AG04449 (cell line): ENCODE measurements at regions of chr19 and their contacts with region 1.

Region 1: DNA sequence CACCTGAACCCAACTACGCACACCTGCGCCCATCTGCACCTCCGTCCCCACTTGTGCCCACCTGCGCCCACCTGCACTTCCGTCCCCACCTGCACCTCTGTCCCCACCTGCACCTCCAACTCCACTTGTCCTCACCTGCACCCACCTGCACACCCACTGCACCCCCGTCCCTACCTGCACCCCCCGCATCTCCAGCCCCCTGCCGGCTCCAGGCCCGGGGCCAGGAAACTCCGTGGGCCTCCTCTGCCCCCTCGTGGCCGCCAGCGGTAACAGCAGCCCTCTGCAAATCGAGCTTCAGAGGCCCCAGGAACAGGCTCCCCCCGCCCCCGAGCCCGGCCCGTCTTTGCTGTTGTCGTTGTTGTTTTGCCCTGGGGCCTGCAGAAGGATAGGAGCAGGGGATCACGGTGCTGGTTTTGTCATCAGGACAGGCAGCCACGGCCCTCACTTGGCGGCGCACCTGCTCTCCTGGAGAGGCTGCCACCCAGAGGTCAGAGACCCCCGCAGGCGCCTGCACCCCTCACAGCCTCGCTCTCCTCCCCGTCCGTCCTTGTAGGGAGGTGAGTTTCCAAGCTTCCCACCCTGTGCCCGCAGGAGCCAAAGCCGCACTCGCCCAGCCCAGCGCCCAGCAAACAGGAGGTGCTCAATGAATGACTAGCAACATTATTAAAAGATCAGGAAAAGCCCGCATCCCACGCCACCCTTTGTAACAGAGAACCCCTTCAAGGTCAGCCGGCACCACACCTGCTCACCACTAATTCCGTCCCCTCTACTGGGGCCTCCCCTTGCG is 65.4 kb downstream of the GNG7 start:
- DNase-seq: no peak
- H3K4me3 ChIP-seq: no peak overlapping the region
- CTCF ChIP-seq: peak; percentile 87

Region 2: GRCh38 chr19:2427429-2428320 is 209.4 kb before region 1 on chr19 and contains the start of gene TIMM13:
- CTCF ChIA-PET with region 1: interaction called, 10 read pairs
- POLR2A ChIA-PET with region 1: interaction called, 3 read pairs
- DNase-seq: peak; percentile 76
- H3K4me3 ChIP-seq: peak within 1 kb of the TSS; percentile 92
- CTCF ChIP-seq: no peak

Region 3: GRCh38 chr19:2469102-2469914 is 167.8 kb before region 1 on chr19:
- CTCF ChIA-PET with region 1: interaction called, 12 read pairs
- POLR2A ChIA-PET with region 1: no interaction called
- DNase-seq: no peak
- H3K4me3 ChIP-seq: no peak overlapping the region
- CTCF ChIP-seq: no peak

Region 4: GRCh38 chr19:2618611-2619010 is 18.5 kb before region 1 on chr19:
- CTCF ChIA-PET with region 1: interaction called, 50 read pairs
- POLR2A ChIA-PET with region 1: no interaction called
- DNase-seq: no peak
- H3K4me3 ChIP-seq: no peak overlapping the region
- CTCF ChIP-seq: no peak

Region 5: DNA sequence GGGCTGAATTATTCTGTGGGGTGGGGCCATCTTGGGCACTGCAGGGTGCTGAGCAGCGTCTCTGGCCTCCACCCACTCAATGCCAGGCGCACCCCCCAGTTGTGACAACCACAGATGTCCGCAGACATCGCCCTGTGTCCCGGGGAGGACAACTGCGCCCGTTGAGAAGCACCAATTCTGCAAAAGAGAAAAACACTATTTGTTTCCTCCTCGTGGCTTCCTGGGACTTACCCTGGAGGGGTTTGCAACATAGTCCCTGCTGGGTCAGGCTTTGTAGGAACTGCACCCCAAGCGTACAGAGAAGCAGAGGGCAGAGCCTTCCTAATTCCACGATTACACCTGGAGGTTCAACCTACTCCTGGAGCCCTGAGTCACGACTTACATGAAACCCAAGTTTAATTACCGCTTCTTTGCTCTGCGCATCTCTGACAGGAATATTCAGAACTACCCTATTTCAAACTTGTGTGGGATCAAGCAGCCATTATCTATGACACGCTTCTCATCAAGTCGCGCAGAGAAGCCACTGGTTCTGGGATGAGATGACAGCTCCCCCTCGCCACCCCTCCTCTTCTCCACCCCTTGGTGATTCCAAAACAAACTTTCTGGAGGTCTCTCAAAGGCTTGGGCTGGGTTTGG is 113.8 kb after region 1 on chr19:
- CTCF ChIA-PET with region 1: interaction called, 13 read pairs
- POLR2A ChIA-PET with region 1: no interaction called
- DNase-seq: no peak
- H3K4me3 ChIP-seq: no peak overlapping the region
- CTCF ChIP-seq: no peak